Ovary (tissue), 10 donors: ENCODE measurements at regions of chr3 and their contacts with region 1.

Region 1: GRCh38 chr3:155690921-155691320 is 54.0 kb downstream of the PLCH1 start:
- DNase-seq: no peak
- H3K4me3 ChIP-seq: no peak overlapping the region
- H3K27ac ChIP-seq: no peak overlapping the region
- H3K4me1 ChIP-seq: no peaks in the 10 kb centered on the region
- H3K27me3 ChIP-seq: no peaks in the 10 kb centered on the region
- CTCF ChIP-seq: no peak
- EP300 ChIP-seq: no peak
- POLR2A ChIP-seq: no peak

Region 2: GRCh38 chr3:154345422-154346122 is 1345.3 kb before region 1 on chr3:
- intact Hi-C with region 1: loop called in 1 of 4 experiments (anchors 10 kb)
- DNase-seq: no peak
- H3K4me3 ChIP-seq: no peak overlapping the region
- H3K27ac ChIP-seq: no peak overlapping the region
- H3K4me1 ChIP-seq: no peaks in the 10 kb centered on the region
- H3K27me3 ChIP-seq: no peaks in the 10 kb centered on the region
- CTCF ChIP-seq: no peak
- EP300 ChIP-seq: no peak
- POLR2A ChIP-seq: no peak

Region 3: GRCh38 chr3:155352900-155353490 is 337.9 kb before region 1 on chr3:
- intact Hi-C with region 1: loop called in 2 of 4 experiments (anchors 5 to 10 kb)
- DNase-seq: no peak
- H3K4me3 ChIP-seq: no peak overlapping the region
- H3K27ac ChIP-seq: no peak overlapping the region
- H3K4me1 ChIP-seq: no peaks in the 10 kb centered on the region
- H3K27me3 ChIP-seq: no peaks in the 10 kb centered on the region
- CTCF ChIP-seq: peak in 1 of 3 donors; percentile 34
- EP300 ChIP-seq: no peak
- POLR2A ChIP-seq: no peak

Region 4: GRCh38 chr3:155554777-155555451 is 136.0 kb before region 1 on chr3:
- intact Hi-C with region 1: no loop called
- DNase-seq: no peak
- H3K4me3 ChIP-seq: no peak overlapping the region
- H3K27ac ChIP-seq: no peak overlapping the region
- H3K4me1 ChIP-seq: no peaks in the 10 kb centered on the region
- H3K27me3 ChIP-seq: no peaks in the 10 kb centered on the region
- CTCF ChIP-seq: no peak
- EP300 ChIP-seq: no peak
- POLR2A ChIP-seq: no peak